ENCODE measurements at regions of chr17 and their contacts with region 1.

Region 1: DNA sequence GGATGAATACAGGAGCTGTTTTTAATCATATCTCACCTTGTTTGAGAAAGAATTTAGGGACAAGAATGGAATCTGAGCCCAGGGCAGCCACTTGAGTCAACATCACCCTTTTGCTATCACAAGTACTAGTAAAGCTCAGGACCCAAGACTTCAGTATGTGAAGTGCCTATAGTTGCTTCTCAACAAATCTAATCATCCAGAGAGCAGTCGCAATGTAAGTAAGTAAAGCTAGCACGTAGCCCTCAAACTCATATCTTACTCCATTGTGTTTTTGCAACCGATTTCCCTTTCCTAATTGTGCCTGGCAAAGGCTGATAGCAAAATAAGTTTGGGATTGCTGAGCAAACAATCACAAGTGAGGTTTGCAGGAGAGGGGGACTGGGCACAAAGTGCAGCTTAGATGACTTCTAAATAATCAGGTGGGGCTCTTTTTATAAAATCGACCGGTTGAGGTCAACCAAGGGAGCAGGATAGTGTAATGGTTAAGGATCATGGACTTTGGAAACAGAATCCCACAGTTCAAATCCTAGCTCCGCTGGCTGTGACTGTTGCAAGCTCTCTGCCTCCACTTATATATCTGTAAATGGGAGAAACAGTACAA is 13.0 kb downstream of the TOB1 start:
- DNase-seq: no peak
- H3K4me3 ChIP-seq: no peak overlapping the region
- H3K27ac ChIP-seq: no peak overlapping the region
- H3K27me3 ChIP-seq: peaks cover 2% of the 10 kb centered on the region
- CTCF ChIP-seq: no peak

Region 2: GRCh38 chr17:50841949-50842354 is 11.2 kb before region 1 on chr17:
- CTCF ChIA-PET with region 1: interaction called, 30 read pairs
- POLR2A ChIA-PET with region 1: no interaction called
- DNase-seq: no peak
- H3K4me3 ChIP-seq: no peak overlapping the region
- H3K27ac ChIP-seq: no peak overlapping the region
- H3K27me3 ChIP-seq: peaks cover 3% of the 10 kb centered on the region
- CTCF ChIP-seq: peak; percentile 86

Region 3: GRCh38 chr17:50944054-50944901 is 91.2 kb after region 1 on chr17:
- CTCF ChIA-PET with region 1: interaction called, 218 read pairs
- POLR2A ChIA-PET with region 1: no interaction called
- DNase-seq: no peak
- H3K4me3 ChIP-seq: peak overlapping the region; percentile 25; the same call in 1 of the 2 replicates
- H3K27ac ChIP-seq: no peak overlapping the region
- H3K27me3 ChIP-seq: no peaks in the 10 kb centered on the region
- CTCF ChIP-seq: no peak

Region 4: DNA sequence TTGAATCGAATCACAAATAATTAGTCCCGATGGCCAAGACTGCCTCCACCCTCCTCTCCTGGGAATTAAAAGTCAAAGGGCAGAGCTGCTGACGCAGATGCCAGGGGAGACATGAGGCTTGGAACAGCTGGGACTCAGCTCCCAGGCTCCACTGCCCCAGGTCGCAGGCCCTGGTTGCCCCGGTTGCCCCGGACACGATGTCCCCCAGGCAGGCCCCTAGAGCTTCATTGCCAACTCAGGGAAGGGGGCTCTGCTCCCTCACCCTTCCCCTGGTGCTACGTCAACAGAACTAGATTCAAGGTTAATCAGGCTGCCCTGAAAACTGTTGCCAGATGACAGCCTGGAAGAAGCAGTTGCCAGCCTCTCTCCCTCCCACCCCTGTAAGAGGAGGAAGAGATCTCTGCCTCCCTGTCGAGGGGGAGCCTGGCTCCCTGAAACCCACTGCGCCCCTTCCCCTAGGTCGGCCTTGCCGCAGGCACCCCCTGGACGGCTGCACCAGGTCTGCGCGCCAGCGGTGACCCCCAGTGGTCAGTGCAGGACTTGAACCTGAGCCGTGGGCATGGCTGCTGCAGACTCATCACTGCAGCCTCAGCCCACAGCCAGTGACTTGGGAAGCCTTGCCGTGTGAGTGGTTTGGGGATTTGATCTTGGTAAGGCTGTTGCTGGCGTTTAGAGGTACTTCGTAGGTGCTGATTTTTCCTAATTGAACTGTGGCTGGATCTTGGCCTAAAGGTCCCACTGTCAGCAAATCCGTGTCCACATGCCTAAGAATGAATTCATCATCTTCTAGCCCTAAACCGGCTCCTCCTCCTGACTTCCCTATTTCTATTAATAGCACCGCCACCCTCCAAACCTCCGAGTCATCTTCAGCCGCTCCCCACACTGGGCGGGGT is 97.1 kb after region 1 on chr17:
- CTCF ChIA-PET with region 1: interaction called, 218 read pairs
- POLR2A ChIA-PET with region 1: no interaction called
- DNase-seq: peak; percentile 37
- H3K4me3 ChIP-seq: no peak overlapping the region
- H3K27ac ChIP-seq: peak overlapping the region; percentile 80
- H3K27me3 ChIP-seq: no peaks in the 10 kb centered on the region
- CTCF ChIP-seq: peak; percentile 68

Region 5: GRCh38 chr17:50956750-50957523 is 103.8 kb after region 1 on chr17:
- CTCF ChIA-PET with region 1: interaction called, 218 read pairs
- POLR2A ChIA-PET with region 1: interaction called, 5 read pairs
- DNase-seq: peak; percentile 20
- H3K4me3 ChIP-seq: no peak overlapping the region
- H3K27ac ChIP-seq: no peak overlapping the region
- H3K27me3 ChIP-seq: no peaks in the 10 kb centered on the region
- CTCF ChIP-seq: peak; percentile 87

Region 6: DNA sequence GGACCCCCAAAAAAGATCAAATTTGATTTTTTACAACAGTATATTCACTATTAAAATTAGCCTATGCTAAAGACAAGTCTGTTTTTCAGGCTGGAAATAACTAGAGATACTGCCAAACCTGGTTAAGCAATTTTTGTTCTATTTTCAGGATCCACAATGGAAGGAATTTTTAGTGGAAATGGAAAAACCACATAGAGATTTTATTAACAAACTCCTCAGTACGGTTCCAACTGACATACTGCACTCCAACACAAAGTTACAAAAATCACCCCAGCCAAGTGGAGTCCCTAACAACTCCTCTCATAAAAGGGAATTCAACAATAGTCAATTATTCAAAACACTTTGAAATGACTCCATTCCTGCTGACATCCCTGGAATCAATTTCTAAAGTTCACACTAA is 114.7 kb after region 1 on chr17:
- CTCF ChIA-PET with region 1: interaction called, 10 read pairs
- POLR2A ChIA-PET with region 1: no interaction called
- DNase-seq: no peak
- H3K4me3 ChIP-seq: no peak overlapping the region
- H3K27ac ChIP-seq: no peak overlapping the region
- H3K27me3 ChIP-seq: no peaks in the 10 kb centered on the region
- CTCF ChIP-seq: no peak

Region 7: GRCh38 chr17:51000835-51001638 is 147.9 kb after region 1 on chr17:
- CTCF ChIA-PET with region 1: interaction called, 10 read pairs
- POLR2A ChIA-PET with region 1: no interaction called
- DNase-seq: peak; percentile 45
- H3K4me3 ChIP-seq: no peak overlapping the region
- H3K27ac ChIP-seq: no peak overlapping the region
- H3K27me3 ChIP-seq: no peaks in the 10 kb centered on the region
- CTCF ChIP-seq: peak; percentile 54

Measured in AG04450 (cell line).